ENCODE measurements at regions of chr1 and their contacts with region 1.

Region 1: DNA sequence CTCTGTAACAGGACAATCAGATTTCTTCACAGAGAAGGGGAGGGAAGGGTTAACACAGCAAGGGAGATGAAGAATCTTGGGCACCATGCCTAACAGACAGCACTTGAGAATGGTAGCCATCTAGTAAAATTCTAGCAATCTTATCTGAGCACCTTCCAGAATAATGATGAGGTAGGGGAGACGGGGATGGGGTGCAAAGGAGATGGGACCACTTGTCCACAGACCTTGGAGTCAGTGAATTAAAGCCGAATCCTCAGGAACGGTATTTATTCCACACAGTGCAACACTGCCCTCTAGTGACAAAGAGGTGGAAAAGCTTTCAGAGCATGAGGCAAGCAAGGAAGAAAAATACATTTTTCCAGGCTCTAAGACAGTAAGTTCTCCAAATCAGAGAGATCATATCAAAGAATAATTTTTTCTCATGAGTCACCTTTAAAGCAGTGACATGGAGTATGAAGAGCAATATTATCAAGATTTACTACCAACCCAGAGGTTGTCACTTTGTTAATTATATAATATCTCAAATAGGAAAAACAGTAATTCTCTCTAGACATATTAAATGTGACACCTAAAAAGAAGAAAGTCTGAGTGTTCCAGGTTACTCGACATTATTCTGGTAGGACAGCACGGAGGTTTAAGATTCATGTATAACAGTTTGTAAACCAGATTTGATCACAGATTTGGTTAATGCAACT is 43.3 kb upstream of the LPAR3 start:
- DNase-seq: no peak
- ATAC-seq: peak; percentile 73 to 74
- H3K4me3 ChIP-seq: no peak overlapping the region
- H3K27ac ChIP-seq: no peak overlapping the region
- H3K4me1 ChIP-seq: no peaks in the 10 kb centered on the region
- H3K27me3 ChIP-seq: no peaks in the 10 kb centered on the region

Region 2: GRCh38 chr1:84143796-84144565 is 792.3 kb before region 1 on chr1 and contains the start of gene PRKACB:
- intact Hi-C with region 1: loop called in 1 of 4 experiments (anchors 10 kb)
- DNase-seq: no peak
- ATAC-seq: peak; percentile 47
- H3K4me3 ChIP-seq: no peak within 1 kb of the TSS
- H3K27ac ChIP-seq: no peak within 1 kb of the TSS
- H3K4me1 ChIP-seq: no peaks in the 10 kb centered on the region
- H3K27me3 ChIP-seq: no peaks in the 10 kb centered on the region
- total RNA-seq, gene PRKACB: 49.6 to 53.5 (median 51.3) TPM